Naive thymus-derived CD4-positive, alpha-beta T cell (primary cell): ENCODE measurements at regions of chr1 and their contacts with region 1.

Region 1: GRCh38 chr1:211703812-211704537 is 28.6 kb upstream of the NEK2 start:
- DNase-seq: no peak
- ATAC-seq: no peak
- H3K4me3 ChIP-seq: no peak overlapping the region
- H3K4me3 Mint-ChIP-seq: no peak overlapping the region
- H3K27ac ChIP-seq: no peak overlapping the region
- H3K27ac Mint-ChIP-seq: peak overlapping the region in 1 of 9 donors; percentile 25
- H3K4me1 ChIP-seq: no peaks in the 10 kb centered on the region
- H3K4me1 Mint-ChIP-seq: peaks cover 0 to 6% (median 0%) of the 10 kb centered on the region in 7 donors
- H3K27me3 ChIP-seq: no peaks in the 10 kb centered on the region
- H3K27me3 Mint-ChIP-seq: peaks cover 0 to 36% (median 0%) of the 10 kb centered on the region in 5 donors

Region 2: GRCh38 chr1:210951279-210951678 is 752.7 kb before region 1 on chr1:
- CTCF ChIA-PET with region 1: no interaction called
- POLR2A ChIA-PET with region 1: no interaction called
- intact Hi-C with region 1: no loop called
- DNase-seq: no peak
- ATAC-seq: no peak
- H3K4me3 ChIP-seq: no peak overlapping the region
- H3K4me3 Mint-ChIP-seq: no peak overlapping the region
- H3K27ac ChIP-seq: no peak overlapping the region
- H3K27ac Mint-ChIP-seq: no peak overlapping the region
- H3K4me1 ChIP-seq: no peaks in the 10 kb centered on the region
- H3K4me1 Mint-ChIP-seq: no peaks in the 10 kb centered on the region
- H3K27me3 ChIP-seq: no peaks in the 10 kb centered on the region
- H3K27me3 Mint-ChIP-seq: peaks cover 0 to 11% (median 6%) of the 10 kb centered on the region in 5 donors

Region 3: DNA sequence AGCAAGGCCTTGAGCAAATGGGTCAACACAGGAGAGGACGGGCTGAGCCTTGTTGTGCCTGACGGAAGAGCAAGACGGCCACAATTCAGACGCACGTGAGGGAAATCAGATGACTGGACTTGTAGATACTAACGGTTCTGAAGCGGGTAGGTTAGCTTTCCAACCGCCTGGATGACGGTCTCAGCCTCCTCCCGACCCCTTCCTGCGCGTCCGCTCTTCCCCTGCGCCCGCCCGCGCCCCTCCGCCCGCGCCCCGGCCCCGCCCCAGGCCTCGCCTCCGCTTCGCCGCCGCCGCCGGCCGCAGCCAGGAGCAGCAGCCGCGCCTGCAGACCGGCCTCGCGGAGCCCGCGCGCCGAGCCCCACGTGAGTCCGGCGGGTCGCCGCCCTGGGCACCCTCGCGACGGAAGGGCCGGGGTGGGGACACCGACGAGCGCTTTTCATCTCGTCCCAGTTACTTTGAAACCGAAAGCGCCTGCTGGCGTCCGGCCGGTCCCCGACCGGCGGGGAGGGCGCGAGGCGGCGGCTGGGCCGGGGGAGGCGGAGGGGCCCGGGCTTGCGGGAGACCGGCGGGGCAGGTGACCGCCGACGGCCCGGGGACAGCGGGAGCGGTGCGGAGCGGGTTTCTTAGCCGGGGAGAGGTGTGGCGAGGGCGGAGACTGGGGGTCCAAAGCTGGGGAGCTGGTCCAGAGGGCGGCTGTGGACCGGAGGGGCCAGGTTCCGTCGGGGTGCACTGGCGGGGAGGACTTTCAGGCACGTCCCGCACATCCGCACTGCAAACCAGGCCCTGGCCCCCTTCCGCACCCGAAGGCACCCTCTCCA is 377.2 kb before region 1 on chr1 and contains the start of gene TRAF5:
- CTCF ChIA-PET with region 1: no interaction called
- POLR2A ChIA-PET with region 1: no interaction called
- intact Hi-C with region 1: no loop called
- DNase-seq: peak in 8 of 9 donors; percentile 22 to 76 (median 42)
- ATAC-seq: peak; percentile 59
- H3K4me3 ChIP-seq: peak within 1 kb of the TSS; percentile 72
- H3K4me3 Mint-ChIP-seq: peak within 1 kb of the TSS; percentile 90 to 98 (median 97)
- H3K27ac ChIP-seq: peak within 1 kb of the TSS; percentile 82
- H3K27ac Mint-ChIP-seq: peak within 1 kb of the TSS; percentile 94 to 99 (median 97)
- H3K4me1 ChIP-seq: peaks cover 21 to 51% of the 10 kb centered on the region in 2 donors
- H3K4me1 Mint-ChIP-seq: peaks cover 52 to 73% (median 65%) of the 10 kb centered on the region in 7 donors
- H3K27me3 ChIP-seq: no peaks in the 10 kb centered on the region
- H3K27me3 Mint-ChIP-seq: no peaks in the 10 kb centered on the region
- total RNA-seq, gene TRAF5: 36.2 to 72.2 (median 55.8) TPM

Region 4: GRCh38 chr1:211735208-211736170 is 31.5 kb after region 1 on chr1:
- CTCF ChIA-PET with region 1: interaction called, 4 read pairs
- POLR2A ChIA-PET with region 1: no interaction called
- intact Hi-C with region 1: loop called in 1 of 2 experiments (anchors 5 kb)
- DNase-seq: no peak
- ATAC-seq: no peak
- H3K4me3 ChIP-seq: no peak overlapping the region
- H3K4me3 Mint-ChIP-seq: no peak overlapping the region
- H3K27ac ChIP-seq: no peak overlapping the region
- H3K27ac Mint-ChIP-seq: peak overlapping the region in 1 of 9 donors; percentile 14
- H3K4me1 ChIP-seq: peaks cover 30 to 36% of the 10 kb centered on the region in 2 donors
- H3K4me1 Mint-ChIP-seq: peaks cover 29 to 44% (median 33%) of the 10 kb centered on the region in 7 donors
- H3K27me3 ChIP-seq: no peaks in the 10 kb centered on the region
- H3K27me3 Mint-ChIP-seq: no peaks in the 10 kb centered on the region